SK-N-SH (cell line): ENCODE measurements at regions of chr11 and their contacts with region 1.

Region 1: GRCh38 chr11:120511116-120511819 is at the start of gene GRIK4:
- DNase-seq: peak; percentile 96
- H3K4me3 ChIP-seq: peak within 1 kb of the TSS; percentile 54 to 56; a peak in 3 of 4 replicates
- H3K27ac ChIP-seq: no peak within 1 kb of the TSS; a peak in 1 of 4 replicates
- H3K4me1 ChIP-seq: peaks cover 0 to 20% of the 10 kb centered on the region in 2 experiments; a peak in 1 of 4 replicates
- H3K27me3 ChIP-seq: peaks cover 18% of the 10 kb centered on the region; the same call in 1 of the 2 replicates
- CTCF ChIP-seq: peak; percentile 90
- EP300 ChIP-seq: no peak
- RAD21 ChIP-seq: peak; percentile 96
- polyA plus RNA-seq, gene GRIK4: 0.02 and 0.03 TPM in 2 replicates

Region 2: GRCh38 chr11:120335908-120336640 is 175.2 kb before region 1 on chr11 and contains the start of gene ARHGEF12:
- CTCF ChIA-PET with region 1: interaction called, 15 read pairs
- POLR2A ChIA-PET with region 1: no interaction called
- DNase-seq: peak; percentile 98
- H3K4me3 ChIP-seq: peak within 1 kb of the TSS; percentile 91 to 93
- H3K27ac ChIP-seq: peak within 1 kb of the TSS; percentile 81 to 92
- H3K4me1 ChIP-seq: peaks cover 13 to 34% of the 10 kb centered on the region in 2 experiments
- H3K27me3 ChIP-seq: no peaks in the 10 kb centered on the region
- CTCF ChIP-seq: peak; percentile 73
- EP300 ChIP-seq: peak; percentile 41 to 61; a peak in 1 of 4 replicates
- RAD21 ChIP-seq: no peak
- polyA plus RNA-seq, gene ARHGEF12: 12.3 and 15.9 TPM in 2 replicates

Region 3: DNA sequence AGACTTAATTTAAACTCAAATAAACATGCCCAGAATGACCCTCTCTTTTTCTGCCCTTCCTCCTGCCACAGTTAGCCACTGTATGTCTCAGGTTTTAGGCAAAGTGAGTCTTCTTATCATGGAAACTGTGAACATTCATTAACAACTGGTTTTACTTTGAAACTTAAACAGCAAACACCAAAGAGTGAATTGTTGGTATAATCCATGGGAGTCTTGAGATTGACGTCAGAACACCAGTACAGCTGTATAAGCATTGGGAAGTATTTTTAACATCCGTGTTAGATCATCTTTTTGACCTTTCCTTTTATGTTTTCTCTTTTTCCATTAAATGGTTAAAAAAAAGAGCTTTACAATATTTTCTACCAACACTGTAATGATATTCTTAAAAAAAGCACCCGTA is 136.2 kb before region 1 on chr11:
- CTCF ChIA-PET with region 1: no interaction called
- POLR2A ChIA-PET with region 1: no interaction called
- DNase-seq: no peak
- H3K4me3 ChIP-seq: no peak overlapping the region
- H3K27ac ChIP-seq: no peak overlapping the region
- H3K4me1 ChIP-seq: peaks cover 6% of the 10 kb centered on the region in 2 experiments; a peak in 3 of 4 replicates
- H3K27me3 ChIP-seq: no peaks in the 10 kb centered on the region
- CTCF ChIP-seq: no peak
- EP300 ChIP-seq: no peak
- RAD21 ChIP-seq: no peak

Region 4: DNA sequence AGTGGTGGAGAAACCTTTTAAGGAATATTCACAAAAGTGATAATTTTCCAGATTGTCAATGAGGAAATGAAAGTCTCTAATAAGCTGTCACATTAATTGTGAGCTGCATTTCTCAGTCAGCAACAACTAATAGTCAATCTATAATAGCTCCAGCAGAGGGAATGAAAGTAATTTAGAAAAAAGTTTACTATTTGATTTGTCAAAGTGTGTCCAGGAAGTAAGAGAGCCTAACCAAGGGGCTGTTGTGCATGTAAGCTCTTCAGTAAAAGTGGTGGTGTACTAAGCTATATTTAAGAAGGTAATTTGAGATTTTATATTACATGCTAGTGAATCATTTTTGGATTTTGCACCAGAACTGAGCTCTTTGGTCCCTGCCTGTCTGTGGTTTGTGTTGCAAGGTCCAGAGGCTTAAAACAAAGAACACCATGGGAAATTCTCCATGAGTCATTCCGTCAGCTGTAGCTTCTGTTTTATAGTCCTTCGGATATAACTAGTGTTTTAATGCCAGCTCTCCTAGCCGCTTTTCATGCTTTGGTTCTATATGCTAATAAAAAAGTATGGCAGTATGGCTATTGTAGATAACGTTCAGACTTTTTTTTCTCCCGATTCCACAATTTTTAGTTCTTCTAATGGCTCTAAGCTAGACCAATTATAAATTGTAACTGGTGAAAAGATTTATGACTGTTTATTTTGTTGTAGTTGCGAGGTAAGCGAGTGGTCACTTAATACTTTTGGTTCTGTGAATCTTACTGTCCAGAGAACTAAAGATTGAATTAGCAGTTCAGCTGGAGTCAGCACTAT is 110.5 kb before region 1 on chr11:
- CTCF ChIA-PET with region 1: no interaction called
- POLR2A ChIA-PET with region 1: no interaction called
- DNase-seq: no peak
- H3K4me3 ChIP-seq: peak overlapping the region; percentile 14 to 27; a peak in 2 of 4 replicates
- H3K27ac ChIP-seq: peak overlapping the region; percentile 50 to 74; a peak in 3 of 4 replicates
- H3K4me1 ChIP-seq: peaks cover 2 to 28% of the 10 kb centered on the region in 2 experiments; a peak in 2 of 4 replicates
- H3K27me3 ChIP-seq: no peaks in the 10 kb centered on the region
- CTCF ChIP-seq: no peak
- EP300 ChIP-seq: peak; percentile 12 to 66; a peak in 1 of 4 replicates
- RAD21 ChIP-seq: no peak

Region 5: DNA sequence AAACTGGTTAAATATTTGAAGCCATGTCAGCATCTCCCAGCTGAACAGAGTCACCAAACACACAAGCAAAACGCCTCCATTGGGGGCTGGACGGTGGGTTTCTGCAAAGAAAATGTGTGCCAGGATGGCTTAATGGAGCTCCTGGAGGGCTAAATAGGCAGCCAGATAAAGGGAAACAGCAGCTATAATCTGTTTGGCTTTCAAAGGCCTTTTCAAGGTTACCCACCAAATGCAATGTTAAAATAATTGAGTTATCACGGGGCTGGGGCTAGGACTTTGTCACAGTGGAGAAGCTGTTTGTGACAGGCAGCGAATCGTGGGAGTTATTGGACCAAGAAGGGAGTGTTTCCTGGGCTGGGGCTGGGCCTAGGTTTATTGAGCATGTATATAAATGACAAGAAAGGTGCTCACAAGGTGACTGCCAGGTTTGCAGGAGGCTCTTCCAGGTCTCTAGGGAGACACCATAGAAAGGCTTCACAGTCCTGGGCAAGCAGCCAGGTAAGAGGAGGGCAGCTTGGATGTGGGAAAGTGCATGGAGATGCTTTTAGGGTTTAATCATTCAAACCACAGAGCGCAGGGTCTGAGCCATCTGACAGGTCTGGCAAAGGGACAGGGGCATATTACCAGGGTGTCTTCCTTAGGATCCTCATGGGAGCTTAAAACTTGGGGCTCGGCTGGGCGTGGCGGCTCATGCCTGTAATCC is 28.6 kb after region 1 on chr11:
- CTCF ChIA-PET with region 1: interaction called, 21 read pairs
- POLR2A ChIA-PET with region 1: no interaction called
- DNase-seq: peak; percentile 72
- H3K4me3 ChIP-seq: no peak overlapping the region
- H3K27ac ChIP-seq: peak overlapping the region in 1 of 2 experiments; percentile 86; a peak in 2 of 4 replicates
- H3K4me1 ChIP-seq: peaks cover 0 to 25% of the 10 kb centered on the region in 2 experiments; a peak in 2 of 4 replicates
- H3K27me3 ChIP-seq: no peaks in the 10 kb centered on the region
- CTCF ChIP-seq: no peak
- EP300 ChIP-seq: peak in 1 of 2 experiments; percentile 76; a peak in 2 of 4 replicates
- RAD21 ChIP-seq: no peak; the same call in 1 of the 2 replicates

Region 6: GRCh38 chr11:120674542-120674941 is 163.3 kb after region 1 on chr11:
- CTCF ChIA-PET with region 1: interaction called, 14 read pairs
- POLR2A ChIA-PET with region 1: no interaction called
- DNase-seq: no peak
- H3K4me3 ChIP-seq: no peak overlapping the region
- H3K27ac ChIP-seq: no peak overlapping the region
- H3K4me1 ChIP-seq: peaks cover 0 to 3% of the 10 kb centered on the region in 2 experiments; a peak in 1 of 4 replicates
- H3K27me3 ChIP-seq: no peaks in the 10 kb centered on the region
- CTCF ChIP-seq: no peak
- EP300 ChIP-seq: no peak
- RAD21 ChIP-seq: no peak

Region 7: DNA sequence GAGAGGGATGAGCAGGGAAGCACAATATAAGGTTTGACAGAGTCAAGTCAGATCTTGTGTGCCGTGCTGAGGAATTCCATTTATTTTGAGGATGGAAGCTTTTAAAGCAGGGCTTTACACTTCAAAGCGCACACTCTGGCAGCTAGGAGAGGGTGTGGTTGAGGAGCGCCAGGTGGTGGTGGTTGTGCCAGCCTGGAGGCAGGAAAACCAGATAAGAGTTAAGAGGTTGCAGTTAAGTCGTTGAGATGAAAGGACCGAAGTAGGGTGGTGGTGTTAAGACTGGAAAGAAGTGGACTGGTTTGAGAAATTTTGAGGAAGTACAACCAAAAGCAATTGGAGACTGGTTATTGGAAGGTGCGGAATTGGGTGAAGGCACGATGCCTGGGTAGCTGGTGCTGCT is 281.0 kb after region 1 on chr11:
- CTCF ChIA-PET with region 1: interaction called, 11 read pairs
- POLR2A ChIA-PET with region 1: no interaction called
- DNase-seq: no peak
- H3K4me3 ChIP-seq: no peak overlapping the region
- H3K27ac ChIP-seq: no peak overlapping the region
- H3K4me1 ChIP-seq: peaks cover 0 to 4% of the 10 kb centered on the region in 2 experiments; a peak in 1 of 4 replicates
- H3K27me3 ChIP-seq: no peaks in the 10 kb centered on the region
- CTCF ChIP-seq: no peak
- EP300 ChIP-seq: no peak
- RAD21 ChIP-seq: no peak

Region 8: GRCh38 chr11:120952461-120953434 is 441.5 kb after region 1 on chr11:
- CTCF ChIA-PET with region 1: interaction called, 88 read pairs
- POLR2A ChIA-PET with region 1: no interaction called
- DNase-seq: peak; percentile 89
- H3K4me3 ChIP-seq: peak overlapping the region in 1 of 2 experiments; percentile 54; a peak in 1 of 4 replicates
- H3K27ac ChIP-seq: peak overlapping the region in 1 of 2 experiments; percentile 62; a peak in 2 of 4 replicates
- H3K4me1 ChIP-seq: peaks cover 0 to 34% of the 10 kb centered on the region in 2 experiments; a peak in 1 of 4 replicates
- H3K27me3 ChIP-seq: no peaks in the 10 kb centered on the region; the same call in 1 of the 2 replicates
- CTCF ChIP-seq: peak; percentile 73
- EP300 ChIP-seq: no peak
- RAD21 ChIP-seq: peak; percentile 93